ENCODE measurements at regions of chr7 and their contacts with region 1.

Region 1: GRCh38 chr7:44581879-44582603 is at the start of gene TMED4:
- DNase-seq: peak; percentile 100
- ATAC-seq: peak; percentile 98 to 99 (median 98)
- H3K4me3 ChIP-seq: peak within 1 kb of the TSS; percentile 64 to 98 (median 82)
- H3K27ac ChIP-seq: peak within 1 kb of the TSS; percentile 92 to 99 (median 98)
- H3K4me1 ChIP-seq: peaks cover 5 to 29% (median 22%) of the 10 kb centered on the region in 12 donors
- H3K27me3 ChIP-seq: no peaks in the 10 kb centered on the region
- CTCF ChIP-seq: peak in 1 of 12 donors; percentile 11
- POLR2A ChIP-seq: peak in 1 of 2 donors; percentile 80
- total RNA-seq, gene TMED4: 55.4 to 129 (median 68.9) TPM

Region 2: GRCh38 chr7:44986218-44987053 is 404.4 kb after region 1 on chr7:
- intact Hi-C with region 1: loop called in 1 of 10 experiments (anchors 10 kb)
- DNase-seq: peak; percentile 94 to 98 (median 97)
- ATAC-seq: peak; percentile 98 to 99 (median 98)
- H3K4me3 ChIP-seq: peak overlapping the region; percentile 18 to 74 (median 62)
- H3K27ac ChIP-seq: peak overlapping the region; percentile 89 to 98 (median 96)
- H3K4me1 ChIP-seq: peaks cover 0 to 54% (median 24%) of the 10 kb centered on the region in 12 donors
- H3K27me3 ChIP-seq: no peaks in the 10 kb centered on the region
- CTCF ChIP-seq: no peak
- POLR2A ChIP-seq: peak; percentile 39 to 96

Measured in heart left ventricle (tissue), 16 donors.